Panc1 (cell line): ENCODE measurements at regions of chr1 and their contacts with region 1.

Region 1: GRCh38 chr1:40939320-40940059 is 40.0 kb upstream of the CTPS1 start:
- DNase-seq: no peak
- ATAC-seq: no peak
- H3K4me3 ChIP-seq: no peak overlapping the region
- H3K27ac ChIP-seq: peak overlapping the region; percentile 10; the same call in 1 of the 2 replicates
- H3K4me1 ChIP-seq: 0 out of 2 replicates have a peak, but pooled peaks cover 4% of the 10 kb centered on the region
- H3K27me3 ChIP-seq: no peaks in the 10 kb centered on the region
- CTCF ChIP-seq: no peak

Region 2: DNA sequence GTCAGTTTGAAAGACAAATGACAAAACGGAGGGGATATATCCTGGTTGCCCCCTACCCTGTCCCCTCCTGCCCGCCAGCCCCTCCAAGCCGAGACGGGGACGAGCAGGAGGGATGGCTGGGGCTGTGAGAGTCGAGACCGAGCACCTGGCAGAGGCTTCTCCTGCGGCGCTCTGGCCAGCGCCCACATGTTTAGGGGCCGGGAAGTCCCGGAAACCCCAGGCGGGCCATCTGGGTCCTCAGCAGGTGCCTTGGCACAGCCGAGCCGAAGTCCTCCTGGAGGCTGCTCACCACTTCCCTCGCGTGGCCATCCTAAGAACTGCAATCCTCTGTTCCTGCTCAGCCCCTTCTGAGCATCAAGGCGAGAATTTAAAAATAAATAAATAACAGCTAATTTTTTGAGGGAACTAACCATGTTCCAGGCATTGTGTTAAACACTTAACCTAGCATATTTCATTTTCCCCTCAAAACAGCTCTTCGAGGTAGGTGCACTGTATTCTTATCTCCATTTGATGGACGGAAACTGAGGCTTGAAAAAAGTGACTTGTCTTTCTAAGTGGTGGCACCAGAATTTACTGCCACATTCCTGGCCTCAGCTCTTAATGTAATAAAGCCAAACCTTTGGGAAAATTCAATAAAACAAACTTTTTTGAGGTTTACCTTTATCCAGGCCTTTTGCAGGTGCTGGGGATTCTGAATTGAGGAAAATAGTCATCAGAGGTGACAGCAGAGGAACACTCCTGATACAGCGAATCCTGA is 270.5 kb before region 1 on chr1:
- CTCF ChIA-PET with region 1: no interaction called
- POLR2A ChIA-PET with region 1: interaction called, 12 read pairs
- in situ Hi-C with region 1: no loop called
- intact Hi-C with region 1: no loop called
- DNase-seq: peak; percentile 61
- ATAC-seq: peak; percentile 68
- H3K4me3 ChIP-seq: peak overlapping the region; percentile 19 to 29
- H3K27ac ChIP-seq: no peak overlapping the region
- H3K4me1 ChIP-seq: peaks cover 5% of the 10 kb centered on the region
- H3K27me3 ChIP-seq: no peaks in the 10 kb centered on the region
- CTCF ChIP-seq: peak; percentile 97

Region 3: DNA sequence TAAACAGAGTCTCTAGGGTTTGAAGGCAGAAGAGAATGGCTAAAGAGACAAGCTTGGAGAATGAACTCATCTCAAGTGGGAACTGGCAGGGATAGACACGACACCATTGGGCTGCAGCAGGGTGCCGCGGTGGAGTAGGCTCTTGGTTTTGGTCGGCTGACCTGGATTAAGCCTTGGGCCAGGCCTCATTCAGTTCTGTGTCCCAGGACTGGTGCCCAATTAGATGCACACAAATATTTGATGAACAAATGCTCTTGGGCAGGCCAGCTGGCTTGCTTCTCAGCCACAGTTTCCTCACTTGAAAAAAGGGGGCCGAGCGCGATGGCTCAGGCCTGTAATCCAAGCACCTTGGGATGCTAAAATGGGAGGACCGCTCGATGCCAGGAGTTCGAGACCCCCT is 23.9 kb before region 1 on chr1:
- CTCF ChIA-PET with region 1: no interaction called
- POLR2A ChIA-PET with region 1: no interaction called
- in situ Hi-C with region 1: no loop called
- intact Hi-C with region 1: no loop called
- DNase-seq: no peak
- ATAC-seq: no peak
- H3K4me3 ChIP-seq: no peak overlapping the region
- H3K27ac ChIP-seq: peak overlapping the region; percentile 89
- H3K4me1 ChIP-seq: peaks cover 43% of the 10 kb centered on the region
- H3K27me3 ChIP-seq: no peaks in the 10 kb centered on the region
- CTCF ChIP-seq: no peak

Region 4: GRCh38 chr1:40986956-40987355 is 47.5 kb after region 1 on chr1:
- CTCF ChIA-PET with region 1: no interaction called
- POLR2A ChIA-PET with region 1: interaction called, 10 read pairs
- in situ Hi-C with region 1: no loop called
- intact Hi-C with region 1: no loop called
- DNase-seq: no peak
- ATAC-seq: no peak
- H3K4me3 ChIP-seq: no peak overlapping the region
- H3K27ac ChIP-seq: peak overlapping the region; percentile 20; the same call in 1 of the 2 replicates
- H3K4me1 ChIP-seq: peaks cover 29% of the 10 kb centered on the region
- H3K27me3 ChIP-seq: no peaks in the 10 kb centered on the region
- CTCF ChIP-seq: no peak